Activated CD4-positive, alpha-beta memory T cell treated with anti-CD3 and anti-CD28 coated beads, Interleukin-2, amount 10 ng/mL, durations not matched to agents 7 days and 5 days (primary cell): ENCODE measurements at regions of chr18 and their contacts with region 1.

Region 1: GRCh38 chr18:42064109-42064508 is 109.1 kb downstream of the PIK3C3 start:
- DNase-seq: no peak
- H3K4me3 Mint-ChIP-seq: no peak overlapping the region
- H3K27ac Mint-ChIP-seq: no peak overlapping the region
- H3K4me1 Mint-ChIP-seq: peaks cover 13% of the 10 kb centered on the region
- H3K27me3 Mint-ChIP-seq: no peaks in the 10 kb centered on the region

Region 2: GRCh38 chr18:42053188-42053781 is 10.8 kb before region 1 on chr18:
- CTCF ChIA-PET with region 1: interaction called, 33 read pairs
- POLR2A ChIA-PET with region 1: interaction called, 3 read pairs
- DNase-seq: peak; percentile 65
- H3K4me3 Mint-ChIP-seq: no peak overlapping the region
- H3K27ac Mint-ChIP-seq: peak overlapping the region; percentile 4
- H3K4me1 Mint-ChIP-seq: peaks cover 11% of the 10 kb centered on the region
- H3K27me3 Mint-ChIP-seq: no peaks in the 10 kb centered on the region